ENCODE measurements at regions of chr1 and their contacts with region 1.

Region 1: DNA sequence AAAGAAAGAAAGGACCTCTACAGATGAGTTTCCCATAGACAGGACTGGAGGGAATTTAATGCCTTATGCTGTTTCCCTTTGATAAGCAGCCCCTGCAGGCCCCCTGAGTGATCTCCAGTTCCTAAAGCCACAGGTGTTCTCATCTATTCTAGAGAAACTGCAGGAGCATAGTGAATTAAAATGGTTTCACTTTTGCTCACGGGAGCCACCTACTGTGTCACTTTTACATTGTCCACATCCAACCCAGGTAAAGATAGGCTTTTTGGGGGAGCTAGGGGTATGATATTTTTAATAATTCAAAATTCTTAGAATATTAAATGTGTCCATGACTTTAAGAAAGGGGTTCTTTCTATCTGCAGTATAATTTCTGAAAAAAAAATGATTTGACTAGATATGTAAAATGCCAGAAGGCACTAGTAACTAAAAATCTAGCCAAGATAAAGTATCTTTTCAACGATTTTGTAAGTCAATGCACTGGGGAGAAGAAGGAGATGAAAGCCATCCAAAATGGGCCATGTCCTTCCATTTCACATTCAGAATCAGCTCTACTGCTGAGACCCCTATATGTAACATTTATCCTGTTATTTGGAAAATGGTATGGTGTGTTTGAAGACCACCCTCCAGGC is 267.3 kb upstream of the DUSP10 start:
- DNase-seq: peak in 8 of 9 experiments; percentile 3 to 65 (median 17)
- ATAC-seq: peak; percentile 57
- H3K4me3 ChIP-seq: no peak overlapping the region
- H3K4me3 Mint-ChIP-seq: no peak overlapping the region
- H3K27ac ChIP-seq: no peak overlapping the region
- H3K27ac Mint-ChIP-seq: no peak overlapping the region
- H3K4me1 ChIP-seq: no peaks in the 10 kb centered on the region
- H3K4me1 Mint-ChIP-seq: no peaks in the 10 kb centered on the region
- H3K27me3 ChIP-seq: no peaks in the 10 kb centered on the region
- H3K27me3 Mint-ChIP-seq: no peaks in the 10 kb centered on the region
- CTCF ChIP-seq: peak; percentile 60

Region 2: GRCh38 chr1:221543529-221544120 is 465.6 kb before region 1 on chr1:
- CTCF ChIA-PET with region 1: no interaction called
- POLR2A ChIA-PET with region 1: no interaction called
- intact Hi-C with region 1: loop called (anchors 1 to 10 kb)
- DNase-seq: peak in 2 of 9 experiments; percentile 20 to 30
- ATAC-seq: no peak
- H3K4me3 ChIP-seq: no peak overlapping the region
- H3K4me3 Mint-ChIP-seq: no peak overlapping the region
- H3K27ac ChIP-seq: no peak overlapping the region
- H3K27ac Mint-ChIP-seq: no peak overlapping the region
- H3K4me1 ChIP-seq: no peaks in the 10 kb centered on the region
- H3K4me1 Mint-ChIP-seq: no peaks in the 10 kb centered on the region
- H3K27me3 ChIP-seq: no peaks in the 10 kb centered on the region
- H3K27me3 Mint-ChIP-seq: peaks cover 17% of the 10 kb centered on the region
- CTCF ChIP-seq: peak; percentile 44

Measured in CD8-positive, alpha-beta T cell (primary cell).